ENCODE measurements at regions of chr1 and their contacts with region 1.

Region 1: GRCh38 chr1:66521721-66522365 is 12.1 kb upstream of the SGIP1 start:
- DNase-seq: no peak
- CTCF ChIP-seq: no peak

Region 2: DNA sequence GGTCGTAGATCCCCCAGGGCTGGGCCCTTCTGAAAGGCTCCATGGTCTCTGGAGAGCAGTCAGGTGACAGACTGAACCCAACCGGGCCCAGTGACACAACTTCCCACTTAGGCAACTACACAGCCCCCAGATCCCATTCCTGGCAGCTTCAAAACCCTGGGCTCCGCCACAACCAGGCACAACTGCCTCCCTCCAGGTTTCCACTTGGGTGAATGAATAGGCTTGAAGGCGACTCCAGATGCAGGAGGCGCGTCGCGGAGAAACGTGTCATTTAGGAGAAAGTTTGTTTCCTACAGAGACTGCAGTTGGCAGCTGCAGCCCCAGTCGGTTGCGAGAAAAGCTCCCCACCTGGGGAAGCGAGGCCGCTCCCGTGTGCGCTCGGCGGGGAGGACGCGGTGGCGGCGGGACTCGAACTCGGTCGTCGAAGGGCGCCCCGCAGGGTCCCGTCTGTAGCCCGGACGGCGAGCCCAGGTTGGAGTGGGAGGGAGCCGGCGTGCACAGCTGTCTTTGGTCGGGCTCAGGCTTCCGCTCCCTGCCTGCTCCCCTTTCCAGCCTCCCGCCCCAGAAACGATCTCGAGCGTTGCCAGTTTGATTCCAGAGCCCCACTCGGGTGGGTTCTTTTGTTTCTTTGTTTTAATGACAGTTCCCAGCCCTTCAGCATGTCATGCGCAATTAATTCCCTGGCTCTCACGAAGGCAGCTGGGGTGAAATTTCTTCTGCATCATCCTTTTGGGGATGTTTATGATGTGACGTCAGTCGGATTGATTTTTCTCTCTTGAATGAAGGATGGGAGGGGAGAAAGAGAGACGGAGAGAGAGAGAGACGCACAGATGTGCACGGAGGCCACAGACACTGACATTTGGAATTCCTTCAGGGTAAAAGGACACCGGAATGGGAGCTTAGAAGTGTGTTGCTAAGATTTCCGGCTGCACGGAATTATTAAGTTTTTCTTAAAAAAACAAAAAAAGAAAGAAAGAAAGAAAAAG is 11.2 kb after region 1 on chr1:
- CTCF ChIA-PET with region 1: interaction called, 10 read pairs
- POLR2A ChIA-PET with region 1: no interaction called
- DNase-seq: peak; percentile 9
- CTCF ChIP-seq: no peak

Region 3: DNA sequence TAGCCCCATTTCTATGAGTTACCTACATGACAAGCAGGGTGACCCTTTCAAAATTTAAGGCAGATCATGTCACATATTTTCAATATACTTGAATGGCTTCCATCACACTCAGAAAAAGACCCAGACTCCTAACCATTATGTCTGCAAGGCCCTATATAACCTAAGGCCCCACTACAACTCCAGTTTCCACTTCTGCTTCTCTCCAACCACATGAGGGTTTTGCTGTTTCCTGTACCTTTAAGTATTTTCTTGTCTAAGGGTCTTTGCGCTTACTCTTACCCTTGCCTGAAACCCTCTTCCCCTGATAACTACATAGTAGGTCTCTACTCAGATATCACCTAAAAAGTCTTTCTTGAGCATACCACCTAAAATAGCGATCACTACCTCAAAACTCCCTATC is 58.2 kb after region 1 on chr1:
- CTCF ChIA-PET with region 1: no interaction called
- POLR2A ChIA-PET with region 1: no interaction called
- DNase-seq: no peak
- CTCF ChIP-seq: no peak